Aorta (tissue), 5 donors: ENCODE measurements at regions of chr13 and their contacts with region 1.

Region 1: DNA sequence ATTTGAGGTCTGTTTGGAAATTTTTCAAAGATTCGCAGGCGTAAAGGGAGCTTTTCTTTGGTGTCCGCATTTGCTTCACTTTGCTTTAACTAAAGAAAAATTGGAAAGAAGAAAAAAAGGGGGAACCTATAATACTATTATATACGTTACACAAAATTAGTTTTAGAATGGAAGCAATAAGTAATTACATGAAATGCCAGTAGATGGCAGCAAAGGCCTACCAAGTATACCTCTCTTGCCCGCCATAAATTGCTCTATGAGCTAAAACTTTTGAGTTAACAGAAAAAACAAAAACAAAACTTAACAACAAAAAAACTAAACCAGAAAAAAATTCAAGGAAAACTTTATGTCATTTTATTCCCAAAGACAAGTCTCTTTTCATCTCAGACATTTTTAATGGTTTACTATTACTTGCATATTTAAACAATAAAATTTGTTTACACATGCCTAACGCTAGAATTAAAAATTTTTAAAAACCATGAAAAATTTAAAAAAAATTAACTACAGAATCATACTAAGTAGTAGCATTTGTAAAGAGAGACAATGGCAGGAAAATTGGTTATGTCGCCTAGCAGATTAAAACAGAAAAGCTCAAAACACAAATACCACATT is 271.4 kb downstream of the NALCN start:
- DNase-seq: no peak
- ATAC-seq: no peak
- H3K4me3 ChIP-seq: no peak overlapping the region
- H3K27ac ChIP-seq: no peak overlapping the region
- H3K4me1 ChIP-seq: no peaks in the 10 kb centered on the region
- H3K27me3 ChIP-seq: no peaks in the 10 kb centered on the region

Region 2: DNA sequence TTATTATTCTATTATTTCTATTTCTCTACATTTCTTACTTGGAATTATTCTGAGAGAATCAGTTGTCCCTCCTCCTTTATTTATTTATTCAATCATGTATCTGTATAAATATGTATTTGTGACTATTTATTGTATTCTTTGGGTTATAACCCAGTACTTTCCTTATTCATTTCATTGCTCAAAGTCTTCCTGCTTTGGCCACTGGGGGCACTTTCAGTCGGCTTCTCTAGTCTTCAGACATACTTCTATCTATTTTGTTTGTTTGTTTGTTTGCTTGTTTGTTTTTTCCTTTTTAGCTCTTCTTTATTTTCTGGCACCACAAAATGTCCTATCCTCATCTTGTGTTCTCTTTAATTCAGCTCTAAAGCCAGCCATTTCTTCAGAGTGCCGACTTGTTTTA is 11.0 kb after region 1 on chr13:
- intact Hi-C with region 1: no loop called
- DNase-seq: no peak
- ATAC-seq: no peak
- H3K4me3 ChIP-seq: no peak overlapping the region
- H3K27ac ChIP-seq: no peak overlapping the region
- H3K4me1 ChIP-seq: no peaks in the 10 kb centered on the region
- H3K27me3 ChIP-seq: no peaks in the 10 kb centered on the region

Region 3: DNA sequence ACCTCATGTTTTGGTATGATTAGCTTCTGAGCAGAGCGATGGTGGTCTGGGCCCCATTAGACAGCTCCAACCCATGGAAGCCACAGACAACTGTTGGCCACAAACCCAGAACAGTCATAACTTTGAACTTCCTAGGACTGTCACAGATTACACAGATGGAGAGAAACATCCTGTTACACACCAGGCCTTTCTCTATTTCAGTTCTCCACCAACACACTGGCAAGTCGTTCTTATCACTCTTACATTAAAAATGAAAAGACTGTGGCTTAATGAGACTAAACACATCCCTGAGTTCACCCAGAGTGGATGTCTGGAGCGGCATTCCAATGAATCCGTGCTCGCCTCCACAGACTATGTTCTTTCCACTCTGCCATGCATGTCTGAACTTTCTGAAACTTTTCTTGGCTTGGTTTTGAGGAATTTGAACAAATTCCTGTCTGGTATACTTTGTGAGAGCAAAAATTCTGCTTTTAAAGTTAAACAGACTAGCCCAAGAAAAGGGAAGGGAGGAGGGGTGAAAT is 162.3 kb after region 1 on chr13:
- intact Hi-C with region 1: loop called in 1 of 2 experiments (anchors 10 kb)
- DNase-seq: peak in 1 of 2 donors; percentile 53
- ATAC-seq: no peak
- H3K4me3 ChIP-seq: no peak overlapping the region
- H3K27ac ChIP-seq: peak overlapping the region; percentile 51 to 96
- H3K4me1 ChIP-seq: peaks cover 0 to 2% of the 10 kb centered on the region in 2 donors
- H3K27me3 ChIP-seq: no peaks in the 10 kb centered on the region

Region 4: DNA sequence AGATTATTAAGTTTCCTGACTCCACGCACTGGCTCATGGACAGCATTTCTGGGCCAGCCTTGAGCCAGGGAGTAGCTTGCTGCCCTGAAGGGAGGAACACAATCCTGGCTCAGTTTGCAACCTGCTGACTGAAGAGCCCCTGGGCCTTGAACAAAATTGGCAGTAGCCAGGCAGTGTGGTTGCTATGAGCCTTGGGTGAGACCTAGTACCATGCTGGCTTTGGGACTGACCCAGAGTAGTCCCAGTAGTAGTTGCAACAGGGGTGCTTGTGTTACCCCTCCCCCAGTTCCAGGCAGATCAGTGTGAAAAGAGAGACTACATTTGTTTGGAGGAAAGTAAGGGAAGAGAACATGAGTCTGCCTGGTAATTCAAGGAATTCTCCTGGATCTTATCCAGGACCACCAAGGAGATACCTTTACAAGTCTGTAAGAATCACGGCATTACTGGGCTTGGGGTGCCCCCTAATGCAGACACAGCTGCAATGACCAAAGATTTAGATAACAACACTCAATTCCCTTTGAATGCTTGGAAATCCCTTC is 329.6 kb after region 1 on chr13:
- intact Hi-C with region 1: loop called (anchors 2 to 10 kb)
- DNase-seq: peak in 1 of 2 donors; percentile 53
- ATAC-seq: peak; percentile 81
- H3K4me3 ChIP-seq: no peak overlapping the region
- H3K27ac ChIP-seq: peak overlapping the region in 1 of 2 donors; percentile 4
- H3K4me1 ChIP-seq: peaks cover 0 to 11% of the 10 kb centered on the region in 2 donors
- H3K27me3 ChIP-seq: no peaks in the 10 kb centered on the region

Region 5: GRCh38 chr13:101757446-101758039 is 612.6 kb after region 1 on chr13:
- intact Hi-C with region 1: loop called (anchors 5 to 10 kb)
- DNase-seq: no peak
- ATAC-seq: peak; percentile 77
- H3K4me3 ChIP-seq: no peak overlapping the region
- H3K27ac ChIP-seq: no peak overlapping the region
- H3K4me1 ChIP-seq: no peaks in the 10 kb centered on the region
- H3K27me3 ChIP-seq: no peaks in the 10 kb centered on the region

Region 6: GRCh38 chr13:101919541-101920181 is 774.7 kb after region 1 on chr13:
- intact Hi-C with region 1: loop called in 1 of 2 experiments (anchors 10 kb)
- DNase-seq: peak; percentile 47 to 80
- ATAC-seq: no peak
- H3K4me3 ChIP-seq: no peak overlapping the region
- H3K27ac ChIP-seq: no peak overlapping the region
- H3K4me1 ChIP-seq: no peaks in the 10 kb centered on the region
- H3K27me3 ChIP-seq: peaks cover 0 to 1% of the 10 kb centered on the region in 2 donors